Dorsolateral prefrontal cortex (tissue), 120 donors: ENCODE measurements at regions of chr16 and their contacts with region 1.

Region 1: GRCh38 chr16:4802659-4803287 is 340 bp upstream of the ROGDI start:
- DNase-seq: peak; percentile 87 to 96 (median 94)
- H3K4me3 ChIP-seq: peak overlapping the region; percentile 64 to 97 (median 85)
- H3K27ac ChIP-seq: peak overlapping the region; percentile 56 to 99 (median 94)
- H3K27me3 ChIP-seq: no peaks in the 10 kb centered on the region
- CTCF ChIP-seq: peak in 53 of 56 donors; percentile 16 to 74 (median 52)

Region 2: GRCh38 chr16:4734063-4734729 is 68.6 kb before region 1 on chr16 and contains the starts of genes ANKS3 and DNAAF8:
- intact Hi-C with region 1: loop called in 1 of 2 experiments (anchors 2 kb)
- DNase-seq: peak; percentile 90 to 98 (median 98)
- H3K4me3 ChIP-seq: peak within 1 kb of the TSS; percentile 74 to 100 (median 96)
- H3K27ac ChIP-seq: peak within 1 kb of the TSS in 48 of 59 donors; percentile 14 to 88 (median 69)
- H3K27me3 ChIP-seq: no peaks in the 10 kb centered on the region
- CTCF ChIP-seq: peak in 17 of 56 donors; percentile 4 to 42 (median 19)
- total RNA-seq, gene ANKS3: 28.1 to 66.1 (median 44.0) TPM
- total RNA-seq, gene DNAAF8: 0.23 to 4.7 (median 1.5) TPM